Breast epithelium (tissue), 4 donors: ENCODE measurements at regions of chr1 and their contacts with region 1.

Region 1: DNA sequence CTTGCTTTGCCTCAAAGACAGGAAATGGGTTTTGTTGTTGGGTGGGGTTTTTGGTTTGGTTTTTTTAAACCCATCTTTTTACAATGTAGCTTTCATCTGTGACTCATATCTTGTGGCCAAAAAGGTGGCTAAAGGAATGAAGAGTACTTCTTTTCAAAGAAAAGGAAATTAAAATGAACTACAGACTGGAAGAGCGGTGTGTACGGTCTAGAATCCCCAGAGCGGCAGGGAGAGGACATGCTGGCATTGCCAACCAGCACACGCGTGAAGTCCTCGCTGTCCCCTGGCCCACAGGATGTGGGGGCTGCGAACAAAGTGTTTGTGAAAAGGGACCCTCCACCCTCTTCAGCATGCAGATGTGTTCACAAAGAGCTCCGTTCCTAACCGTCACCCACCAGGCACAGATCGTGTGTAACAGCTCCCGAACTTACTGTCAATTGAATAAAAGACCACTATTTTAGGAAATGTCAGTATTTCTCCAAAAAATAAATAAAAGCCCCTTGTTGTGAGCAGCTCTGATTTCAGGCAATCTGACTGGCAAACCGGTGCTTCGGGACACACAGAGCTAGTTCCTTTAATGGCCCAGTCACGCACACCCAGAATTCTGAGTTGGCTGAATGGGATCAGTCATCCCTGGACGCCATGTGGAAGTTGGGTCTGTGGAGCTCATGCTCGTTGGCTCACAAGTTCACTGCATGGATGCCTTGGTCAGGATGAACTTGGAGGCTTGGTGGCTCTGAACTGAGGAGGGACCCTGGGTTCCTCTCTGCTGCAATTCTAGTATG is 602.9 kb downstream of the NPHP4 start:
- DNase-seq: no peak
- H3K4me3 ChIP-seq: no peak overlapping the region
- H3K27ac ChIP-seq: no peak overlapping the region
- H3K4me1 ChIP-seq: no peaks in the 10 kb centered on the region
- H3K27me3 ChIP-seq: peaks cover 0 to 44% of the 10 kb centered on the region in 2 donors
- CTCF ChIP-seq: no peak
- POLR2A ChIP-seq: no peak

Region 2: DNA sequence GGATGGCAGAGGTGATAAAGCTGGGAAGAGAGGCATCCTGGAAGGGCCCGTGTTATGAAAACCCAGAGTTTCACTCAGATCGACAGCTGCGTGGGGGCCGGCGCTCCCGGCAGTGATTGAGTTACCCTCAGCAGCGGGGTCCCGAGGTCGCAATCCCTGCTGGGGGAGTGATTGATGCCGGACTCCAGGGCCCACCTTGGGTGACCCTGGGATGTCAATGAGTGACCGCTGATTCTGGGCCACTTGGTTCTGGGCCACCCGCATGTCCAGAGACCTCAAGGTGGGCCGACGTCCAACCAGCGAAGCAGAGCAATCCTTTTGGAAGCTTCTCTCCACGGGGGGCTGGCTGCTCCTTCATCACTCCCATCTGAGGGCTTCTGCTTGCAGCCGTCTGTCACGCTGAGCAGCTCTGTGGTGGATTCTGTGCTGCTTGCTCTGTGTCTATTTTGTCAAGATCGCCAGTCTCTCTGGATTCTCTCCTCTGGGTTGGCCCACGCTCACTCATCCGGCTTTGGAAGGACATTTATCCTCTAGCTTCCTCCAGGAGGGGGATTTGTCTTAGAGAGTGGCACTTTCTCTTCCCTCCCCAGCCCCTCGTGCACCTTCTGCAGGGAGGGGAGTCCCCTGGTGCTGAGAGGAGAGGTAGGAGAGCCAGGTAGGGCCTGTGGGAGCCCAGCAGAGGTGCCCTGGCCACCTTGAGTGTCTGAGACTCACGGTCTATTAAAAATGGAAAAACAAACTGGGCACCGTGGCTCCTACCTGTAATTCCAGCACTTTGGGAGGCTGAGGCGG is 1378.3 kb before region 1 on chr1:
- intact Hi-C with region 1: loop called (anchors 5 kb)
- DNase-seq: no peak
- H3K4me3 ChIP-seq: no peak overlapping the region
- H3K27ac ChIP-seq: no peak overlapping the region
- H3K4me1 ChIP-seq: no peaks in the 10 kb centered on the region
- H3K27me3 ChIP-seq: peaks cover 0 to 3% of the 10 kb centered on the region in 2 donors
- CTCF ChIP-seq: no peak
- POLR2A ChIP-seq: no peak

Region 3: DNA sequence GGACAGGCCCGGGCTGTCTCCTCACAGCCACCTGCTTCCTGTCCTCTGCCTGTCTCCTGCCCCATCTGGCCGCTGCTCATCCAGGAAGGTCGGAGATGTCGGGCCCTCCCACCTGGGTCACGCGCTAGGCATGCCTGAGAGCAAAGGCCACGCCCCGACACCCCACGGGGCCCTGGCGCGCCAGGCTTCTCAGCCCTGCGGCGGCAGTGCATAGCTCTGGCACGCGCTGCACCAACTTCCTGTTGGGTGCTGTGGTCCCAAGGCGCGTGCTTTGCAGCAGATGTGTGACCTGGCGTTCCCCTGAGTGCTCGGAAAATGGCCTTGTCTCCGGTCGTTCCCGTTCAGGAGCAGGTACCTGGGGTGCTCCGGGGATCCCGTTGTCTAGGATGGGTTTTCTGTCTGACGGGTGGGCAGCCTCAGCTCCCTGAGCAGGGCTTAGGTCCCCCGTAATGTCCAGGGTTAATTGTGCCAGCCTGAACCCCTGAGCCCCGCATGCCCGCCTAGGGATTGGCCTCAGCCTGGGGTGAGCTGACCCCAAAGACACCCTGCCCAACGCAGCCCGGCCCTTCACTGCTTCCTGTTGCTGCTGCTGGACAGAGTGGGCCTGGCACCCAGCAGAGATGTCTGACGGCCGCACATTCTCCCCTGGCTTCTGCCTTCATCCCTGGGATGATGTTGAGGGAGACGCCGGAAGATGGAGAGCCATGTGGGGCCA is 637.0 kb after region 1 on chr1:
- intact Hi-C with region 1: loop called (anchors 5 kb)
- DNase-seq: peak in 1 of 2 donors; percentile 78
- H3K4me3 ChIP-seq: peak overlapping the region; percentile 31 to 49 (median 32)
- H3K27ac ChIP-seq: peak overlapping the region in 1 of 2 donors; percentile 55
- H3K4me1 ChIP-seq: no peaks in the 10 kb centered on the region
- H3K27me3 ChIP-seq: no peaks in the 10 kb centered on the region
- CTCF ChIP-seq: no peak
- POLR2A ChIP-seq: no peak